ENCODE measurements at regions of chr16 and their contacts with region 1.

Region 1: DNA sequence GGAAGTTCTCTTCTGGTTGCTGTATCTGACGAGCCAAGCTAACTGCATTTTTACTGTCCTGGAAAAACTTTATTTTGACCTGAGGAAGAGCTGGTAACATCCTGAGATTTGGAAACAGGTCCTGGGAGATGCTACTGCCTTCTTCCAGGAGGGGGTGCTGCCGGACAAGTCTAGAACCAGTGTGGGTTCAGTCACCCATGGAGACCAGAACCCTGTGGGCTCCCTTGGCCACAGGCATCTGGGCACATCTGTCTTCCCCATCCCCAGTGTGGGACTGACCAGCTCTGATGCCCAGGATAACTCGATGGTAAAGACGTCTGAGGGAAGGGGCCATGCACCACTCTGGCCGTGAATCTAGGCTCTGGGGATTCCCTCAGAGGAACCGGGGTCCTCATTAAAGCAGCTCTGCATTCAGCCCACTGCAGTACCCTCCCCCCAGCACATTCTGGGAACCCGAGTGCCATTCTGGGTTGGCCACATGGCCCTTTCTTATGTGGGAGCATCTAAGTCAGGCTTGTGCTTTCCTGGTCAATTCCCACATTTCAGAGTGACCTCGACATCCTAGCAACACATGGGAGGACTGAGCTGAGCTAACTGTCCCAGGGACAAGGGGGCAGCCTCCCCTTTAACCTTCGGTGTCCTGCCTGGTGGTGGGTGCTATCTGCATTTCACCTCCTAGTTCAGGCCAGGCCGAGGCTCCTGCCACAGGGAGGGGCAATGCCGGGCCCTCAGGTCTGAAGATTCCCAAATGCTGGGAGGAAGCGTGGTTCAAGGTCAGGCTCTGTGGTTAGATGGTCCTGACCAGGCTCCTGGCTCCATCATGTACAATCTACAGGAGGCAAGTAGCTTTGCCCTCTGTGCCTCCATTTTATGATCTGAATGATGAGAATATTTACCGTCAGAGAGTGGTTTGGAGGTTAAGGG is 6.4 kb downstream of the C16orf86 start:
- DNase-seq: peak; percentile 76
- ATAC-seq: peak; percentile 54

Region 2: GRCh38 chr16:67279296-67280089 is 393.5 kb before region 1 on chr16 and contains the start of gene PLEKHG4:
- intact Hi-C with region 1: no loop called
- DNase-seq: peak; percentile 84
- ATAC-seq: peak; percentile 91
- total RNA-seq, gene PLEKHG4: 0.89 TPM

Region 3: DNA sequence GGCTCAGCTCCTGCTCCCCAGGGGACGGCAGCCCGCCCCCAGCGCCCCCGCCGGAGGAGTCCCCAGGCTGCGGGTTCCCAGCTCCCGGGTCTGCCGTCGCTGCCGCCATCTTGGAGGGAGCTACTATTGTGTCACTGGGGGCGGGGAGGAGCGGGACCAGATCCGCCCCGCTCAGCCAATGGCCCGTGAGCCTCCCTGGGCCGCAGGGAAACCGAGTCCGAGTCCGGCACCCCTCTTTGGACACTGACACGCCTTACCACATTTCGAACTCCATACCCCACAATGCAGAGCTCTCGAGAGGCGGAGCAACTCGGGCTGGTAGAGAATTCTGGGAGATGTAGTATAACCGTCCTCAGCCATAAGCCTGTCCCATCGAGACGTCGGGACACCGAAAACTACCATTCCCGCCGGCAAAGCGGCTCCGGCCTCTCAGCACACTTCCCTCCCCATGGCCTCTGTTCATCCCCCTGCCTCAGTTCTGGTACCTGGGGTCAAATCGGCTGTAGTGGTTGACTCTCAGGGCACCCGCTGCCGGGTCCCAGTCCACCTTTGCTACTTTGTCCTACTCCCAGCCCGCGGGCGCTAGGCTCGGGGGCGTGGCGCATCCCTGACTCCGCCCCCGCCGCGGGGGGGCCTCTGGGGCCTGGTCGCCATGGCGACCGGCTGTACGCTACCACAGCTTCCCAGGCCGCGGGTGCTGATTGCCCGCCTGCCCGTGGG is 133.6 kb after region 1 on chr16 and contains the starts of genes RANBP10 and TSNAXIP1:
- intact Hi-C with region 1: loop called (anchors 10 kb)
- DNase-seq: peak; percentile 97
- ATAC-seq: peak; percentile 98
- total RNA-seq, gene RANBP10: 10.9 TPM
- total RNA-seq, gene TSNAXIP1: 0.32 TPM

Measured in Right ventricle myocardium superior (tissue), 1 donor.